Mammary epithelial cell (primary cell): ENCODE measurements at regions of chr1 and their contacts with region 1.

Region 1: DNA sequence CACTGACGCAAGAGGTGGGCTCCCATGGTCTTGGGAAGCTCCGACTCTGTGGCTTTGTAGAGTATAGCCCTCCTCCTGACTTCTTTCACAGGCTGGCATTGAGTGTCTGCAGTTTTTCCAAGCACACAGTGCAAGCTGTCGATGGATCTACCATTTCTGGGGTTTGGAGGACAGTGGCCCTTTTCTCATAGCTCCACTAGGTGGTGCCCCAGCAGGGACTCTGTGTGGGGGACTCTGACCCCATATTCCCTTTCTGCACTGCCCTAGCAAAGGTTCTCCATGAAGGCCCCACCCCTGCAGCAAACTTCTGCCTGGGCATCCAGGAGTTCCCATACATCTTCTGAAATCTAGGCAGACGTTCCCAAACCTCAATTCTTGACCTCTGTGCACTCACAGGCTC is 236.2 kb downstream of the COL11A1 start:
- DNase-seq: no peak
- H3K4me3 ChIP-seq: no peak overlapping the region
- H3K27ac ChIP-seq: no peak overlapping the region
- H3K4me1 ChIP-seq: no peaks in the 10 kb centered on the region
- H3K27me3 ChIP-seq: no peaks in the 10 kb centered on the region
- CTCF ChIP-seq: no peak

Region 2: GRCh38 chr1:102941377-102941798 is 69.3 kb after region 1 on chr1:
- CTCF ChIA-PET with region 1: no interaction called
- dilution Hi-C with region 1: no loop called
- in situ Hi-C with region 1: no loop called
- intact Hi-C with region 1: no loop called
- DNase-seq: peak; percentile 23
- H3K4me3 ChIP-seq: no peak overlapping the region
- H3K27ac ChIP-seq: no peak overlapping the region
- H3K4me1 ChIP-seq: peaks cover 6% of the 10 kb centered on the region
- H3K27me3 ChIP-seq: no peaks in the 10 kb centered on the region
- CTCF ChIP-seq: no peak

Region 3: DNA sequence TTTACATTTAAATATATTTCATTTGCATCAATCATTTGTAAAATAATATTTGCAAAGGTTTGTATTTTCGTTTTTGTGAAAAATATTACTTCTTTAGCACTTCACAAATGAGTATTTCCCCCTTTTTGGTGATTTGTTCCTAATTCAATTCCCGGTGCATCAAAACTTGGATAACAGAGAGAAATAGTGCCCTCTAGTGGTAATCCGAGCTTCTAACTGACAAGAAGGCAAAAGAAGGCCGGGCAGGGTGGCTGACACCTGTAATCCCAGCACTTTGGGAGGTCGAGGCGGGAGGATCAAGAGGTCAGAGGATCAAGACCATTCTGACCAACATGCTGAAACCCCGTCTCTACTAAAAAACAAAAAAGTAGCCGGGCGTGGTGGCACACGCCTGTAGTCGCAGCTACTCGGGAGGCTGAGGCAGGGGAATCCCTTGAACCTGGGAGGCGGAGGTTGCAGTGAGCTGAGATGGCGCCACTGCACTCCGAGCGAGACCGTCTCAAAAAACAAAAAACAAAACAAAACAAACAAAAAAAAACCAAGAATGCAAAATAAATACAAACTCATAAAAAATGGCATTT is 98.5 kb after region 1 on chr1:
- CTCF ChIA-PET with region 1: no interaction called
- dilution Hi-C with region 1: no loop called
- in situ Hi-C with region 1: no loop called
- intact Hi-C with region 1: loop called (anchors 2 kb)
- DNase-seq: peak; percentile 37
- H3K4me3 ChIP-seq: no peak overlapping the region
- H3K27ac ChIP-seq: no peak overlapping the region
- H3K4me1 ChIP-seq: no peaks in the 10 kb centered on the region
- H3K27me3 ChIP-seq: no peaks in the 10 kb centered on the region
- CTCF ChIP-seq: peak; percentile 49 to 72